ENCODE measurements at regions of chr5 and their contacts with region 1.

Region 1: GRCh38 chr5:86880785-86881492 is 263.2 kb downstream of the COX7C start:
- DNase-seq: peak; percentile 12
- ATAC-seq: peak; percentile 97
- H3K4me3 ChIP-seq: no peak overlapping the region
- H3K27ac ChIP-seq: no peak overlapping the region
- H3K4me1 ChIP-seq: no peaks in the 10 kb centered on the region
- H3K27me3 ChIP-seq: no peaks in the 10 kb centered on the region
- CTCF ChIP-seq: peak; percentile 63 to 77 (median 64)
- EP300 ChIP-seq: no peak
- POLR2A ChIP-seq: no peak
- RAD21 ChIP-seq: peak; percentile 72

Region 2: DNA sequence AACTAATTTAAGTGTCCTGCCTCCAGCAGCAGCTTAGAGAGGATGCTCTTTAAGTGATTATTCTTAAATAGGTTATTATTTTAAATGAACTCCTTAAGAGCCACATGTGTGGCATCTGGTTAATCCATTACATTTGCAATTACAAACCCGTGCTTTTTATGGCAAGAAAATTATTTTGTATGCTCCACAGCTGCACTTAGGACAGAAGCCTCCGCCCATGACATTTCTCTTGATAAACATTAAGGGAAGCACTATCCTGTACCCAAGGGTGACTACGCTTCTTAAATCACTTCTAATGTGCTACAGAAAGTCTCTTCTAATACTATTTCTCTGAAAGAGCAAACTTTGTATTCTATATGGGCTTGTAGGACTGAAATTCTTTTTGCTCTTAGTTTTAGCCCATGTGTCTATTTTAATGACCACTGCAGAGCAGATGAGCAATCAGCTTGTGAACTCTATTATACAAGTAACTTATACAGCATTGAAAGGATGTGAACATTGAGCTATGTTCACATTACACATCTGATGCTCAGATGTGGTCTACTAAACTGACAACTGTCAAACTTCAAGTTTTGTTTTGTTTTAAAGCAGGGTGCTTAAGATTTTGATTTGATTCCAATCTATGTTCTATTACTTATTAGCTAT is 39.8 kb before region 1 on chr5:
- CTCF ChIA-PET with region 1: no interaction called
- POLR2A ChIA-PET with region 1: no interaction called
- RAD21 ChIA-PET with region 1: no interaction called
- SMC1A ChIA-PET with region 1: no interaction called
- in situ Hi-C with region 1: no loop called
- intact Hi-C with region 1: no loop called
- DNase-seq: no peak
- ATAC-seq: no peak
- H3K4me3 ChIP-seq: no peak overlapping the region
- H3K27ac ChIP-seq: no peak overlapping the region
- H3K4me1 ChIP-seq: no peaks in the 10 kb centered on the region
- H3K27me3 ChIP-seq: no peaks in the 10 kb centered on the region
- CTCF ChIP-seq: no peak
- EP300 ChIP-seq: no peak
- POLR2A ChIP-seq: no peak
- RAD21 ChIP-seq: no peak

Region 3: DNA sequence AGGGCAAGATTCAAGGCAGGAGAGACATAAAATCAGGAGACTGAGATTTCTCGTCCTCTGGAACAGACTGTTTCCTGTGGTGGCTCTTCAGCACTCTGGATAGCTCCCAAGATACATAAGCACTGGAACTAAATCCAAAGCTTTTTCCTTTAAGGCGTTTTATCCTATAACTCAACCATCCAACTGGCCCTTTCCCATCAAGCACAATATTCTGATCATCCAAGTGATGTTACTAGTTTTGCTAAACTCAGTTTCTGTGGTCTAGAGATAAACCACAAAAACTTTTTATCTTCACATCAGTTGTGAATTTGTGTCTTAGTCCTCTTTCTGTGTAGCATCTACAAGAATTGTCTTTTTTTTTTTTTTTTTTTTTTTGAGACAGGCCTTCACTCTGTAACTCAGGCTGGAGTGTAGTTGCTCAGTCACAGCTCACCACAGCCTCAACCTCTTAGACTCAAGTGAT is 36.2 kb after region 1 on chr5:
- CTCF ChIA-PET with region 1: no interaction called
- POLR2A ChIA-PET with region 1: no interaction called
- RAD21 ChIA-PET with region 1: no interaction called
- SMC1A ChIA-PET with region 1: no interaction called
- in situ Hi-C with region 1: no loop called
- intact Hi-C with region 1: no loop called
- DNase-seq: no peak
- ATAC-seq: no peak
- H3K4me3 ChIP-seq: no peak overlapping the region
- H3K27ac ChIP-seq: no peak overlapping the region
- H3K4me1 ChIP-seq: no peaks in the 10 kb centered on the region
- H3K27me3 ChIP-seq: no peaks in the 10 kb centered on the region
- CTCF ChIP-seq: no peak
- EP300 ChIP-seq: no peak
- POLR2A ChIP-seq: no peak
- RAD21 ChIP-seq: no peak

Region 4: GRCh38 chr5:86968301-86968753 is 87.4 kb after region 1 on chr5:
- CTCF ChIA-PET with region 1: interaction called, 14 read pairs
- POLR2A ChIA-PET with region 1: no interaction called
- RAD21 ChIA-PET with region 1: interaction called, 11 read pairs
- SMC1A ChIA-PET with region 1: interaction called, 15 read pairs
- in situ Hi-C with region 1: no loop called
- intact Hi-C with region 1: loop called (anchors 1 kb)
- DNase-seq: no peak
- ATAC-seq: no peak
- H3K4me3 ChIP-seq: no peak overlapping the region
- H3K27ac ChIP-seq: no peak overlapping the region
- H3K4me1 ChIP-seq: no peaks in the 10 kb centered on the region
- H3K27me3 ChIP-seq: peaks cover 0 to 2% of the 10 kb centered on the region in 2 experiments; a peak in 1 of 4 replicates
- CTCF ChIP-seq: peak in 1 of 3 experiments; percentile 8; a peak in 2 of 6 replicates
- EP300 ChIP-seq: no peak
- POLR2A ChIP-seq: no peak
- RAD21 ChIP-seq: peak; percentile 50

Region 5: GRCh38 chr5:87008751-87009560 is 128.0 kb after region 1 on chr5:
- CTCF ChIA-PET with region 1: interaction called, 16 read pairs
- POLR2A ChIA-PET with region 1: no interaction called
- RAD21 ChIA-PET with region 1: interaction called, 7 read pairs
- SMC1A ChIA-PET with region 1: interaction called, 7 read pairs
- in situ Hi-C with region 1: no loop called
- intact Hi-C with region 1: loop called (anchors 1 kb)
- DNase-seq: no peak
- ATAC-seq: no peak
- H3K4me3 ChIP-seq: no peak overlapping the region
- H3K27ac ChIP-seq: no peak overlapping the region
- H3K4me1 ChIP-seq: no peaks in the 10 kb centered on the region
- H3K27me3 ChIP-seq: no peaks in the 10 kb centered on the region
- CTCF ChIP-seq: no peak
- EP300 ChIP-seq: no peak
- POLR2A ChIP-seq: no peak
- RAD21 ChIP-seq: no peak

Region 6: GRCh38 chr5:87103596-87104287 is 222.8 kb after region 1 on chr5:
- CTCF ChIA-PET with region 1: no interaction called
- POLR2A ChIA-PET with region 1: no interaction called
- RAD21 ChIA-PET with region 1: no interaction called
- SMC1A ChIA-PET with region 1: no interaction called
- in situ Hi-C with region 1: no loop called
- intact Hi-C with region 1: no loop called
- DNase-seq: no peak
- ATAC-seq: peak; percentile 96
- H3K4me3 ChIP-seq: no peak overlapping the region
- H3K27ac ChIP-seq: peak overlapping the region; percentile 66
- H3K4me1 ChIP-seq: peaks cover 19% of the 10 kb centered on the region
- H3K27me3 ChIP-seq: no peaks in the 10 kb centered on the region
- CTCF ChIP-seq: no peak
- EP300 ChIP-seq: no peak
- POLR2A ChIP-seq: no peak
- RAD21 ChIP-seq: no peak